Posterior vena cava (tissue), 2 donors: ENCODE measurements at regions of chr5 and their contacts with region 1.

Region 1: GRCh38 chr5:53481887-53482716 is 1.7 kb downstream of the FST start:
- DNase-seq: peak; percentile 95

Region 2: GRCh38 chr5:53406630-53407316 is 75.3 kb before region 1 on chr5:
- intact Hi-C with region 1: no loop called
- DNase-seq: no peak

Region 3: GRCh38 chr5:53501054-53501453 is 19.0 kb after region 1 on chr5:
- intact Hi-C with region 1: no loop called
- DNase-seq: no peak

Region 4: DNA sequence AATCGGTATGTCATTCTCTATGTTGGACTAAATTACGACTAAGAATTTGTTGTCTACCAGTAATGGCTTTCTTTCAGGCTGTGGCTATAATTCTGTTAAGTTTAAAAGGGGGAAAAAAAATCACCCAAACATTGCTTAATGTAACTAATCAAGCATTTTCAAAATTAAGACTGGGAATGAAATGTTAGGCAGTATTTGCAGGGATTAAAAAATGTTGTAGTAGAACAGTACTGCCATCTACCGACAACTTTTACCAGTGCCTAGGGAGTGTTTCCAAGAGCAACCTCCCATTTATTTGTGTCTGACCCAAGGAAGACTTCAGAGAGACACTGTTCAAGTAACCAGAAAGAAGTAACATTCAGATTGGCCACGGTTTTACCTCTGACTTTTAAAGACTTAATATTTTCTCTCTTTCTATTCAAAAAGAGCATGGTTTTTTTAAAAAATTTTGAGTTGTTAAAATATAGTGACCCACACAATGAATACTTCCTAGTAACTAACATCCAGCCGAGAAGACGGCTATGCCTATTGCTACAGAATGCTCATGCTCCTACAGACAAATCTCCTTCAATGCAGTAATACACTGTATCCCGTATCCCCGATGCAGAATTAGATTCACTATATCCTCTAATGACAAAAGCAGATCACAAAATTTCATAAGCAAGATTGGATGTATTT is 735.9 kb after region 1 on chr5:
- intact Hi-C with region 1: loop called (anchors 5 to 10 kb)
- DNase-seq: no peak

Region 5: DNA sequence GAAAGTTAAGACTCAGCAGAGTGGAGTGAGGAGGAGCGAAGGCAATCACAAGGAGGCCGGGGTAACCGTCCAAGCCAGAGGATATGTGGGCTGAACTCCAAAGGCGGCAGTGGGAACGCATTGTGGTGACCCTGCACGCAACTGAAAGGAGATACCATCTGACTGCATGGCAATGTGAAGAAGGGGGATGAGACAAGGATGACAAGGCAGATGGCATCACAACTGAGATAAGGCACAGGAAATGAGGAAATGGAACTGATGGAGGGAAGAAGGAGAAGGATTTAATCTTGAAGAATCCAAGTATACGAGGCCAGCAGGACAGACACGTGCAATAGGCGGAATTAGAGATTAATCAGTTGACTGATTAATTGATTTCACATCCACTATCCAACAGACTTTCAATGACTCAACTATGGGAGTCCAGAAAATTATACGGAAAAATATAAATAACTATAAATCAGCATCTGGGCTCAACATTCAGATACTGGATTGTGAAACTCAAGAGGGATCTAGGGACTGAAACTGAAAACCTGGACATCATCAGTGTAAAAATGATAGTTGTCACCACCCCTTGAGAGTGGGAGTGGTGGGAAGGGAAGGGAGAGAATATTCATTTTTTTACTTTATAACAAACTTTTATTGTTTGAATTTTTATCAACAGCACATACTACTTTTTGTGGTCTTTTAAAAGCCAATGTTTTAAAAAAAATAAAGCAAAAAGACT is 742.2 kb after region 1 on chr5:
- intact Hi-C with region 1: loop called (anchors 5 to 10 kb)
- DNase-seq: no peak

Region 6: DNA sequence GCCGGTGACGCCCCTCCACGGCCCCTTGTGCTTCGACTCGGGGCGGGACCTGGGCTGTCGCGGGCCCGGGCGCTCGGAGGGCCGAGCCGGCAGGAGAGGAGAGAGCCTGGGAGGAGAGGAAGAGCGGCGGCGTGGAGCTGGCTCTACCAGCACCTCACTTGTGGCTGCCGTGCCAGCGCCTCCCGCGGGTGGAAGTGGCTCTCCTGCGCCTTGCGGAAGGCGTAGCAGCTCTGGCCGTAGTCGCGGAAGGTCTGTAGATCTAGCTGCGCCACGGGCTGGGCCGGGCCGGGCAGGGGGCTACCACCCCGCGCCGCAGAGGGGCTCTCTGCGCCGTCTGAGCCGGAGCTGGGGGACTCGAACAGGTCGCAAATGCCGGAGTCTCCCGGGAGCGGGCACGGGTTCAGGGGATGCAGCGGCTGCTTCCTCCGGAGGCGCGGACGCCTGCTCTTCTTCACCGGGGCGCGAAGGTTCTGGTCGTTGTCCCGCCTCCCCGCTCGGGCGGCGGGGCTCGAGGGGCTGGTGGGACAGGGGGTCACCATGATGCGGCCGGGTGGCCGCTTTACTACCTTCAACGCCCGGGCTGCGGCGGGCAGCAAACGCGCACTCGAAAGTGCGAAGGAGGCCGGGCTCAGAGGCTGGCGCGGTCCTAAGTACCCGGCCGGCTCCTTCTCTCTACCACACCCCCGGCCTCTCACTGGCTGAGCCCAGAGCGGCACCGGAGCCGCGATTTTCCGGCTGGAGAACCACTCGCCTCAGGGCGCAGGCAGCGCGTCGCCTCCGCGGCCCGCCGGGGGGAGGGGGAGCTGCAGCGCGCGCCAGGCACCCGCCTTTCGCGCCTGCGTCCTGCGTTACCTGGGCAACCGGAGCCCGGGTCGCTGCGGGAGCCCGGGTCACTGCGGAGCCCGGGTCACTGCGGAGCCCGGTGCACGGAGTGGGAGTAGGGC is 1751.2 kb after region 1 on chr5 and contains the start of gene CCNO:
- intact Hi-C with region 1: no loop called
- DNase-seq: peak; percentile 88
- total RNA-seq, gene CCNO: 0.24 to 0.42 TPM